ENCODE measurements at regions of chrX and their contacts with region 1.

Region 1: GRCh38 chrX:119753571-119754257 is 4.7 kb upstream of the SOWAHD start:
- DNase-seq: no peak
- ATAC-seq: peak; percentile 8; the same call in 1 of the 3 replicates
- H3K4me3 ChIP-seq: no peak overlapping the region
- H3K27ac ChIP-seq: peak overlapping the region; percentile 67
- H3K4me1 ChIP-seq: peaks cover 32% of the 10 kb centered on the region
- H3K27me3 ChIP-seq: no peaks in the 10 kb centered on the region
- CTCF ChIP-seq: peak; percentile 53 to 66 (median 61)
- EP300 ChIP-seq: no peak
- POLR2A ChIP-seq: no peak
- RAD21 ChIP-seq: peak; percentile 68

Region 2: GRCh38 chrX:118682258-118683014 is 1071.3 kb before region 1 on chrX:
- CTCF ChIA-PET with region 1: no interaction called
- POLR2A ChIA-PET with region 1: no interaction called
- RAD21 ChIA-PET with region 1: no interaction called
- SMC1A ChIA-PET with region 1: no interaction called
- in situ Hi-C with region 1: no loop called
- intact Hi-C with region 1: no loop called
- DNase-seq: no peak
- ATAC-seq: no peak
- H3K4me3 ChIP-seq: no peak overlapping the region
- H3K27ac ChIP-seq: no peak overlapping the region
- H3K4me1 ChIP-seq: no peaks in the 10 kb centered on the region
- H3K27me3 ChIP-seq: no peaks in the 10 kb centered on the region
- CTCF ChIP-seq: no peak
- EP300 ChIP-seq: no peak
- POLR2A ChIP-seq: no peak
- RAD21 ChIP-seq: no peak

Region 3: DNA sequence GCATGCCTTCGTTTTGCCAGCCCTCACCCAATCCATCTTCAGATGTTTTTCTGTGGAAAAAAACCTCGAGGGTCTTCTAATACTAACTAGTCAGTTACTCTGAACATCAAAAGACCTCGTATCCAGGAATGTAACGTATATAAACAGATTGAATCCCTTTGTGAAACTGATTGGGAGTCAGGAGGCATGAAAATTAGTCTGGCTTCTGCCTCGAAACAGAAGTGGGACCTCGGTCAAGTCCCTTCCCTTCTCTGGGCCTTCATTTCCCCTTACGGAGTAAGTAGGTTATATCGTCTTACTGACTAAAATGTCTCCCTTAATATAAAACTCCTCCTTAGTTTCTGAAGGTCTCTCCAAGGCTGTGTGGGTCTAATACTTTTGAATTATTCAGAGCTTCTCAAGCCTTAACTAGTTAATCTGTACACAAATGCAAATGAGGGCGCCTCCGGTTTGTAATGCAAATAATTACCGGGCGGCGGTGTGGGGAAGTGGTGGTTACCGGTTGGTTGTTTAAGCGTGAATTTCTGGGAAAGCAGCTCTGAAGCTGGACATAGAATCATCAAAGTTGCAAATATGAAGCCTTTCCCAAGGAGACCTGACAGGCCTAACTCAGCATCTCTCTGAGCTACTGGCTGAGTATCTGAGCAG is 136.1 kb before region 1 on chrX:
- CTCF ChIA-PET with region 1: interaction called, 23 read pairs
- POLR2A ChIA-PET with region 1: interaction called, 6 read pairs
- RAD21 ChIA-PET with region 1: interaction called, 71 read pairs
- SMC1A ChIA-PET with region 1: interaction called, 28 read pairs
- in situ Hi-C with region 1: no loop called
- intact Hi-C with region 1: no loop called
- DNase-seq: no peak
- ATAC-seq: peak; percentile 76
- H3K4me3 ChIP-seq: peak overlapping the region; percentile 29; the same call in 1 of the 2 replicates
- H3K27ac ChIP-seq: peak overlapping the region; percentile 54
- H3K4me1 ChIP-seq: peaks cover 30% of the 10 kb centered on the region
- H3K27me3 ChIP-seq: no peaks in the 10 kb centered on the region
- CTCF ChIP-seq: no peak
- EP300 ChIP-seq: no peak
- POLR2A ChIP-seq: 0 out of 2 replicates have a peak, but pooled peaks have one; percentile 4
- RAD21 ChIP-seq: no peak

Region 4: GRCh38 chrX:119685225-119686066 is 68.3 kb before region 1 on chrX:
- CTCF ChIA-PET with region 1: interaction called, 9 read pairs
- POLR2A ChIA-PET with region 1: interaction called, 42 read pairs
- RAD21 ChIA-PET with region 1: interaction called, 47 read pairs
- SMC1A ChIA-PET with region 1: interaction called, 36 read pairs
- in situ Hi-C with region 1: no loop called
- intact Hi-C with region 1: loop called (anchors 2 kb)
- DNase-seq: no peak
- ATAC-seq: peak; percentile 56
- H3K4me3 ChIP-seq: peak overlapping the region; percentile 60; the same call in 1 of the 2 replicates
- H3K27ac ChIP-seq: peak overlapping the region; percentile 84
- H3K4me1 ChIP-seq: peaks cover 57% of the 10 kb centered on the region
- H3K27me3 ChIP-seq: no peaks in the 10 kb centered on the region
- CTCF ChIP-seq: no peak
- EP300 ChIP-seq: no peak
- POLR2A ChIP-seq: no peak
- RAD21 ChIP-seq: no peak

Region 5: DNA sequence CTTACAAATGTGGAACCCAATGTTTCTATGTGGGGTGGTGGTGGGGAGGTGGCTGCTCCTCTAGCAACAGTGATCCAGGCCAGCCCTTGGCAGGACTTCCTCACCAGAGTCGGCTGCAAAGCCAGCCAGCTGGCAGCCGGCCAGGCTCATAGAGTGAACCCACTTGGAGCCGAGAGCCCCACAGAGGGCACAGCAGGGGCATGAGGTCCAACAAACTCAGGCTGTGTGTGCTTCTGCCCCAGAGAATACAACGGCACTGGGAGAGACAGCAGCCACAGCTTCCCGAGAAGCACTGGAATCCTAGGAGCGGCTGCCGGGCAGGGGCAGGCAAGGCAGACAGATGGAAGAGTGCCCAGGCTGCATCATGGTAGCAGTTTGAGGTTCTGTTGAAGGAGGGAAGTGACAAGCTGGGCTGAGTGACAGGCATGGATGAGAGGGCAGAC is 18.8 kb before region 1 on chrX:
- CTCF ChIA-PET with region 1: interaction called, 78 read pairs
- POLR2A ChIA-PET with region 1: interaction called, 3 read pairs
- RAD21 ChIA-PET with region 1: interaction called, 14 read pairs
- SMC1A ChIA-PET with region 1: interaction called, 42 read pairs
- in situ Hi-C with region 1: no loop called
- intact Hi-C with region 1: no loop called
- DNase-seq: no peak
- ATAC-seq: no peak
- H3K4me3 ChIP-seq: no peak overlapping the region
- H3K27ac ChIP-seq: no peak overlapping the region
- H3K4me1 ChIP-seq: no peaks in the 10 kb centered on the region
- H3K27me3 ChIP-seq: no peaks in the 10 kb centered on the region
- CTCF ChIP-seq: no peak
- EP300 ChIP-seq: no peak
- POLR2A ChIP-seq: no peak
- RAD21 ChIP-seq: no peak

Region 6: GRCh38 chrX:119775517-119776238 is 22.0 kb after region 1 on chrX:
- CTCF ChIA-PET with region 1: interaction called, 47 read pairs
- POLR2A ChIA-PET with region 1: interaction called, 25 read pairs
- RAD21 ChIA-PET with region 1: interaction called, 128 read pairs
- SMC1A ChIA-PET with region 1: interaction called, 61 read pairs
- in situ Hi-C with region 1: no loop called
- intact Hi-C with region 1: loop called (anchors 1 kb)
- DNase-seq: no peak
- ATAC-seq: peak; percentile 69
- H3K4me3 ChIP-seq: no peak overlapping the region
- H3K27ac ChIP-seq: peak overlapping the region; percentile 83
- H3K4me1 ChIP-seq: peaks cover 5% of the 10 kb centered on the region
- H3K27me3 ChIP-seq: no peaks in the 10 kb centered on the region
- CTCF ChIP-seq: no peak
- EP300 ChIP-seq: no peak
- POLR2A ChIP-seq: 0 out of 2 replicates have a peak, but pooled peaks have one; percentile 38
- RAD21 ChIP-seq: no peak